MCF 10A (cell line): ENCODE measurements at regions of chr14 and their contacts with region 1.

Region 1: GRCh38 chr14:31449971-31450610 is 7.2 kb downstream of the DTD2 start:
- DNase-seq: peak; percentile 46
- H3K4me3 Mint-ChIP-seq: no peak overlapping the region
- H3K27ac Mint-ChIP-seq: no peak overlapping the region
- H3K4me1 Mint-ChIP-seq: peaks cover 4% of the 10 kb centered on the region
- H3K27me3 Mint-ChIP-seq: no peaks in the 10 kb centered on the region
- CTCF ChIP-seq: peak; percentile 46

Region 2: GRCh38 chr14:31377433-31377832 is 72.7 kb before region 1 on chr14:
- CTCF ChIA-PET with region 1: interaction called, 11 read pairs
- POLR2A ChIA-PET with region 1: no interaction called
- intact Hi-C with region 1: no loop called
- DNase-seq: no peak
- H3K4me3 Mint-ChIP-seq: no peak overlapping the region
- H3K27ac Mint-ChIP-seq: no peak overlapping the region
- H3K4me1 Mint-ChIP-seq: no peaks in the 10 kb centered on the region
- H3K27me3 Mint-ChIP-seq: no peaks in the 10 kb centered on the region
- CTCF ChIP-seq: no peak

Region 3: GRCh38 chr14:31435276-31435675 is 14.8 kb before region 1 on chr14:
- CTCF ChIA-PET with region 1: interaction called, 11 read pairs
- POLR2A ChIA-PET with region 1: interaction called, 3 read pairs
- intact Hi-C with region 1: no loop called
- DNase-seq: no peak
- H3K4me3 Mint-ChIP-seq: no peak overlapping the region
- H3K27ac Mint-ChIP-seq: peak overlapping the region; percentile 46
- H3K4me1 Mint-ChIP-seq: peaks cover 10% of the 10 kb centered on the region
- H3K27me3 Mint-ChIP-seq: no peaks in the 10 kb centered on the region
- CTCF ChIP-seq: no peak